A549 (cell line): ENCODE measurements at regions of chr17 and their contacts with region 1.

Region 1: GRCh38 chr17:74408262-74408661 is 23.6 kb upstream of the GPRC5C start:
- DNase-seq: peak; percentile 75 to 78
- ATAC-seq: peak; percentile 94 to 97
- H3K4me3 ChIP-seq: no peak overlapping the region
- H3K27ac ChIP-seq: peak overlapping the region in 1 of 2 experiments; percentile 61; a peak in 3 of 6 replicates
- H3K4me1 ChIP-seq: peaks cover 15% of the 10 kb centered on the region
- CTCF ChIP-seq: peak; percentile 60
- EP300 ChIP-seq: no peak
- POLR2A ChIP-seq: no peak
- RAD21 ChIP-seq: peak; percentile 77 to 79

Region 2: DNA sequence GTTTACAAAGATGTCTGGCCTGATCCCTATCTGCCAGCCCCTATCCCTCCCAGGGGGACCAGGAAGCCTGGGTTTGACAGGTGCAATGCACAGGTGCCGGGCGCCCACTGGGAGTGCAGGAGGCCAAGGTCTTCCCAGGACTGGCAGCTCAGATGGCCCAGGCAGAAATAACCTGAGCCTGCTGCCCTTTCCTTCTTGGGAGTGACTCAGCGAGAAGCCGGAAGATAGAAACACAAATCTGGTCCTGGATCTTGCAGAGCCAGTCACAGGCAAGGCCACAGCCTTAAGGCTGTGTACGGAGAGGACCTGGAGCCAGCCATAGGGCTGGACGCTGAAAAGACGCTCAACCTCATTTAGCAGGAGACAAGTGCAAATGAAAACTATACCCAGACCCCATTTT is 13.3 kb before region 1 on chr17:
- CTCF ChIA-PET with region 1: interaction called, 72 read pairs
- POLR2A ChIA-PET with region 1: interaction called, 3 read pairs
- DNase-seq: peak in 1 of 2 experiments; percentile 27
- ATAC-seq: peak; percentile 41 to 49; a peak in 5 of 6 replicates
- H3K4me3 ChIP-seq: no peak overlapping the region
- H3K27ac ChIP-seq: peak overlapping the region in 1 of 2 experiments; percentile 42; a peak in 2 of 6 replicates
- H3K4me1 ChIP-seq: peaks cover 5% of the 10 kb centered on the region; the same call in 2 of the 3 replicates
- CTCF ChIP-seq: no peak
- EP300 ChIP-seq: no peak
- POLR2A ChIP-seq: no peak
- RAD21 ChIP-seq: no peak

Region 3: GRCh38 chr17:74424657-74425056 is 16.4 kb after region 1 on chr17:
- CTCF ChIA-PET with region 1: interaction called, 13 read pairs
- POLR2A ChIA-PET with region 1: no interaction called
- DNase-seq: no peak
- ATAC-seq: no peak
- H3K4me3 ChIP-seq: no peak overlapping the region
- H3K27ac ChIP-seq: 0 out of 6 replicates have a peak overlapping the region, but pooled peaks of 1 of the 2 experiments have one; percentile 23
- H3K4me1 ChIP-seq: peaks cover 20% of the 10 kb centered on the region
- CTCF ChIP-seq: no peak
- EP300 ChIP-seq: no peak
- POLR2A ChIP-seq: no peak
- RAD21 ChIP-seq: no peak

Region 4: DNA sequence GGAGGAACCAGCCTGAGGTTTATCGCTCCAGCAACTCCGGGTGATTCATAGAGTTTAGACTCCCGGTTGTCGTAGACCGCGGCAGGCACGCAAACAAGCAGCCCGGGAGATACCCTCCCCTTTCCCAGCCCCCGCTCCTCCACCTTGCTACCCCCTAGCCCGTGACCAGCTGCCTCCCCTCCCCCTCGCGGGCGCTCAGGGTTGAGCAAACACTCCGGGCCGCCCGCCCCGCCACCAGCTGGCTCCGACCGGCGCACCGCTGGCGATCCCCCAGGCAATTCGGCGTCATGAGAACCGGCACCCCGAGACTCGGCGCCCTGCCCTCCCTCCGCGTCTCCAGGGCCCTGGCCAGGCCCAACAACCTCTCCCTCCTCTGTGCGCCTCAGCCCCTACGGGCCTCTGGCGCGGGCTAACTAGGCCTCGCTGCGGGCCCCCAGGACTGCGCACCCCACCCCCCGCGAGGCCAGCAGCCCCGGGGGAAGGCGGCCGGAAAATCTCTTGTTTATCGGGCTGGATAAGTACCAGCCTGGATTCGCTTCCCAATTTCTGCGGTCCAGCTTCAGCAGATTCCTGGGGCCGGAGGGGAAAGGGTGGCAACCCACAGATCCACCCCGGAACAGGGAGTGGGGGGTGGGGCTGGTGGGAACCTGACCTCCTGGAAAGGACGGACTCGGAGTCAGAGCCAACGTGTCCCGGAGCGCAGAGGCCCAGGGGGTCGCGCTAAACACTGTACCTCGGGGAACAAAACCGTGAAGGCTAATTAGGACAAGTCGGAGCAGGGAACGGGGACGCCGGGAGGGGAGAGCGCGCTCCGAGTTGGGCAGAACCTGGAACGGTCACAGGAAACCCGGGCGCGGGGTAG is 22.7 kb after region 1 on chr17:
- CTCF ChIA-PET with region 1: interaction called, 13 read pairs
- POLR2A ChIA-PET with region 1: interaction called, 5 read pairs
- DNase-seq: peak; percentile 91 to 97
- ATAC-seq: peak; percentile 66 to 84
- H3K4me3 ChIP-seq: peak overlapping the region; percentile 78
- H3K27ac ChIP-seq: peak overlapping the region; percentile 95 to 99
- H3K4me1 ChIP-seq: peaks cover 42% of the 10 kb centered on the region
- CTCF ChIP-seq: no peak
- EP300 ChIP-seq: peak; percentile 39 to 71; a peak in 2 of 5 replicates
- POLR2A ChIP-seq: peak; percentile 9
- RAD21 ChIP-seq: no peak

Region 5: DNA sequence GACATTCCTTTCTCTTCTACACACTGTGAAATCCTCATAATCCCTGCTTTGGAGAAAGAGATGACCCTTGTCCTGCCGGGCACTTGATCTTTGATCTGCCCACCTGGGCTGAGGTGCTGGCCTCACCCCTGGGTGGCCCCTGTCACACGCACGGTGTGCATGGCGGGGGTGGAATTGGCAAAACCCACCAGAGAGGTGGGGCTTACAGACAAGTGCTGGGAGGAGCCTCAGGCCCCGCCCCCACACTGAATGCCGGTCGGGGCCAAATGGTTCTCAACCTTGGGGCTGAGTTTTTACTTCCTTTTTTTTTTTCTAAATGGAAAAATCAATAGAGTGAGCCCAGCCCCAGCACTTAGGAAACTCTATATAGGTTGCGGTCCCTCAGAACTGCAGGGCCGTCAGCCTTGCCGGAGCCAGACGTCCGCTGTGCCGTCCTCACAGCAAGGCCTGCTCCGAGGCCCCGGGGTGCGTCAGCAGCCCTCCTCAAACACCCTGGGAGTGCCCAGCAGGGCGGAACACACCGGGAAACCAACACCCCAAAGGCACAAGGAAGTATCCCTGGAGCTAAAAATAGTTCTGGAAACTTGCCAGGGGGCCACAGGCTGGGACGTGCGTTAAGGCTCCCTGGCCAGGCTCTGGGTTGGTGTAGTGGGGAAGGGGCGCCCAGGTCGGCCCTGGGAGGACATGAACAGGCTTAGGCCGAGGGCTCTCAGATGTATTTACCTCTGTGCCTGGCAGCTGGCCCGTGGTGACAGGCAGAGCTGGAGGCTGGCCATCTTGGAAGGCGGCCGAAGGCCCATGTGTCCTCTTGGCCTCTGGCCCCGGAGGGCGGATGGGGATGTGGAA is 34.6 kb after region 1 on chr17:
- CTCF ChIA-PET with region 1: interaction called, 26 read pairs
- POLR2A ChIA-PET with region 1: no interaction called
- DNase-seq: peak in 1 of 2 experiments; percentile 66
- ATAC-seq: peak; percentile 58 to 70
- H3K4me3 ChIP-seq: no peak overlapping the region
- H3K27ac ChIP-seq: peak overlapping the region; percentile 16 to 61; a peak in 5 of 6 replicates
- H3K4me1 ChIP-seq: peaks cover 17% of the 10 kb centered on the region
- CTCF ChIP-seq: no peak
- EP300 ChIP-seq: no peak
- POLR2A ChIP-seq: no peak
- RAD21 ChIP-seq: no peak

Region 6: GRCh38 chr17:74493381-74493833 is 85.1 kb after region 1 on chr17:
- CTCF ChIA-PET with region 1: no interaction called
- POLR2A ChIA-PET with region 1: no interaction called
- DNase-seq: peak; percentile 75 to 86
- ATAC-seq: peak; percentile 97 to 98
- H3K4me3 ChIP-seq: no peak overlapping the region
- H3K27ac ChIP-seq: no peak overlapping the region
- H3K4me1 ChIP-seq: no peaks in the 10 kb centered on the region
- CTCF ChIP-seq: peak; percentile 90
- EP300 ChIP-seq: no peak
- POLR2A ChIP-seq: no peak
- RAD21 ChIP-seq: peak; percentile 92 to 97